ENCODE measurements at regions of chr4 and their contacts with region 1.

Region 1: DNA sequence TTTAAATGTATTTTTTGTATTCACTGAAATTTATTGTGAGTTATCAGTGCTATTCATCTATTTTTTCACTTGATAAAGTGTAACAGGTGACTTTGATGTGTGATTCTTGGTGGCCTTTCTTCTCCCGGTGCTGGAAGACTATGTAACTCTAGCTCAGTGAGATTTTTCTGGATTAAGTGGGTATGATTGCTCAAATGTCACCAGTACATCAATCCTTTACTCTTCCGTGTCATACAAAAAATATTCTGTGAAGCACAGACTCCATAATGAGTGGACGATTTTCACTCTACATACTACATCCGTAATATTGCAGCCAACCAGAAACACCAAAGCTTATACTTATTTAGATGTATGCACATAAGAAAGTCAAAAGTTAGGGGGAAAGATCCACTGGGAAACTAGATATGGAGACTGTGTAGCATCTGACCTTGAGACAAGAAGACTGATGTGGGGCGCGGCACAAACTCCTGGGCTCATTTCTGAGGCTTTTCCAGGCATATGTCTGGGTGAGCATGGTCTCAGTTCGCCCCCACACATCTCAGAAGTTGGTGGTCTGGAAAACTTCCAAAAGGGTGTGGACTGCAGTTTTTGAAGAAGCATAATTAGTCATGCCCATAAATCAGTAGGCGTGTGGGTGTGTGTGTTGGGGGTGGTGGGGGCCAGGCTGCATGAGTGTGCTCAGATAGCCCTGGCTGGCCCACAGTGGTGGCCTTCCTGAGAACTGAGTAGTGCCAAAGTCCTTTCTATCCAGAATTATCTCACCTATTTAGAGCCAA is 53.9 kb upstream of the TENM3 start:
- DNase-seq: no peak
- H3K4me3 ChIP-seq: no peak overlapping the region
- H3K27ac ChIP-seq: no peak overlapping the region
- H3K4me1 ChIP-seq: no peaks in the 10 kb centered on the region
- H3K27me3 ChIP-seq: no peaks in the 10 kb centered on the region
- CTCF ChIP-seq: no peak
- POLR2A ChIP-seq: no peak

Region 2: DNA sequence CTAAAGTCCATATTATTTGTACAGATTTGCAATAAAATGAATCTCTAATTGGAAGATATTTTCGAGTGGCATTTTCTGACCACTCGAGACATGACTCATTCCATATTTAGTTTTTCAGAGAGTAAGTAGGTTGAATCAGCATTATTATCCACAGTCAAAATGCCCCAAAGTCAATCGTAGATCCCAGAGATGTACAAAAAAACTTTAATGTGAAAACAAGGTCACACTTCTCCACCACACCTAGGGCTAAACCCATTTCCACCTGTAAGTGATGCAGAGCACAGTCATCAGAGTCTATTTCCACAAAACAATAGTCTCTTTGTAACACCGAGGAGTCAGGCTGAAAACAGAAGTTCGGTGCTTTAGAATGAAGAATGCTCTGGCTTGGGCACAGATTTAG is 63.2 kb before region 1 on chr4:
- intact Hi-C with region 1: no loop called
- DNase-seq: no peak
- H3K4me3 ChIP-seq: no peak overlapping the region
- H3K27ac ChIP-seq: no peak overlapping the region
- H3K4me1 ChIP-seq: no peaks in the 10 kb centered on the region
- H3K27me3 ChIP-seq: no peaks in the 10 kb centered on the region
- CTCF ChIP-seq: no peak
- POLR2A ChIP-seq: no peak

Region 3: GRCh38 chr4:182809417-182810102 is 620.3 kb after region 1 on chr4:
- intact Hi-C with region 1: loop called (anchors 5 kb)
- DNase-seq: no peak
- H3K4me3 ChIP-seq: no peak overlapping the region
- H3K27ac ChIP-seq: no peak overlapping the region
- H3K4me1 ChIP-seq: no peaks in the 10 kb centered on the region
- H3K27me3 ChIP-seq: no peaks in the 10 kb centered on the region
- CTCF ChIP-seq: no peak
- POLR2A ChIP-seq: no peak

Measured in breast epithelium (tissue), 4 donors.